Right ventricle myocardium inferior (tissue), 1 donor: ENCODE measurements at regions of chr7 and their contacts with region 1.

Region 1: GRCh38 chr7:102272075-102272917 is 14.4 kb upstream of the SH2B2 start:
- DNase-seq: peak; percentile 91
- ATAC-seq: peak; percentile 87

Region 2: DNA sequence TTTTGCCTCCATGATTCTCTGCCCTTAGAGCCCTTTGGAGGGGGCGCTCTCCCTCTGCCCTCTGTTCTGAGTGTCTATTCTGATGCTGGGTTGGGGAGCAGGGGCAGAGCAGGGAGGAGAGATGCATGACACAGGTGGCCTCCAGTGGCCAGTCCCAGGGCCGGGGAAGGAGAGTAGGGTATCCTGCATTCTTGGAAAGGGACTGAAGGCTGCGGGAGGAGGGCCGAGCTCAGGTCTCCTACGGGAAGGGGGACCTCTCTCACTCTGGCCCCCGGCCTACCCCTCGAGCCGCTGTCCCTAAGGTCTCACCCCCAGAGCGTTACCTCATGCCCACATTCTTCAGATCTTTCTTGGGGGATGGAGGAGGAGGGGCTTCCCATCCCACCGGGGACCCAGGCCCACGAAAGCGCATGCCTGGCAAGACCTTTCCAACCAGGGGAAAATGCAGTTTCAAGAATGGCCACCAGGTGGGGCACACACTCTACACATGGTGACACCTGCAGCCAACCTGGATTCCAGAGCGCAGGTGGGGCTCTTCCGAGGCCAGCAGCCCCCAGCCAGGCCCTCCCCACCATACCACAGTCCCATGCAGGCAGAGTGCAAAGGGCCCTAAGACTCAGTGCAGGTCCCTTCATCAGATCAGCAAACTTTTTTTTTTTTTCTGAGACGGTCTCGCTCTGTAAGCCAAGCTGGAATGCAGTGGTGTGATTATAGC is 729.6 kb before region 1 on chr7:
- intact Hi-C with region 1: loop called (anchors 1 kb)
- DNase-seq: no peak
- ATAC-seq: no peak

Region 3: DNA sequence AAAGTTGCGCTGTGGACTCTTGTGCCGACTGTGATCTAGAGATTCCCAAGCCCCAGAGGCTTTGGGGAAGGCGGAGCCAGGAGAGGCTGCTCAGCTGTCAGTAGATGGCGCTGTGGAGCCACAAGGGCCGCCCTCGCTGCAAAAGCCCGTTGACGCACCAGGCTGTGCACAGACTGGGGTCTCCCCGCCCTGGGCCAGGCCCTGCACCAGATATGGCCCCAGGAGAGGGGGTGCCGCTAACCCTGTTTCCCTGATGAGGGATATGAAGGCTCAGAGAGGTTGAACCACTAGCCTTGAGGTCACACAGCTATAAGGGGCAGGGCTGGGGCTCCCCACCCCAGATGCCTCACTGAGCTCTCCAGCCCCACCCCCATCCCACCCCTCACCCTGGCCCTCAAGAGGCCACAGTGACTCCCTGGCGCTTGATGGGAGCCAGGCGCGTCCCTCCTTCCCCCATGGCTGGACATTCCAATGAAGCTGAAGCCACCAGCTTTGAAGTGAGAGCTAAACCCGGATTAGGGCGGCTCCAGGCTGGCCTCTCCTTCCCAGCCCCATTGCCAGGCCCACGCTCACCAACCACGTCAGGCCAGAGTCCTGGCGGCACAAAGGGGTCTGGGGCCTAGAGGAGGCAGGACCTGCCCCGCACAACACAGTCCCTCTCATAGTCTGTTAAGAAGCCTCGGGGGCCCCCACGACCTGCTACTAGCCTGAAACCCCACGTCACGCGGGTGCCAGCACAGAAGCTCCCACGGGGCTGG is 669.6 kb before region 1 on chr7:
- intact Hi-C with region 1: loop called (anchors 1 kb)
- DNase-seq: peak; percentile 86
- ATAC-seq: peak; percentile 78

Region 4: DNA sequence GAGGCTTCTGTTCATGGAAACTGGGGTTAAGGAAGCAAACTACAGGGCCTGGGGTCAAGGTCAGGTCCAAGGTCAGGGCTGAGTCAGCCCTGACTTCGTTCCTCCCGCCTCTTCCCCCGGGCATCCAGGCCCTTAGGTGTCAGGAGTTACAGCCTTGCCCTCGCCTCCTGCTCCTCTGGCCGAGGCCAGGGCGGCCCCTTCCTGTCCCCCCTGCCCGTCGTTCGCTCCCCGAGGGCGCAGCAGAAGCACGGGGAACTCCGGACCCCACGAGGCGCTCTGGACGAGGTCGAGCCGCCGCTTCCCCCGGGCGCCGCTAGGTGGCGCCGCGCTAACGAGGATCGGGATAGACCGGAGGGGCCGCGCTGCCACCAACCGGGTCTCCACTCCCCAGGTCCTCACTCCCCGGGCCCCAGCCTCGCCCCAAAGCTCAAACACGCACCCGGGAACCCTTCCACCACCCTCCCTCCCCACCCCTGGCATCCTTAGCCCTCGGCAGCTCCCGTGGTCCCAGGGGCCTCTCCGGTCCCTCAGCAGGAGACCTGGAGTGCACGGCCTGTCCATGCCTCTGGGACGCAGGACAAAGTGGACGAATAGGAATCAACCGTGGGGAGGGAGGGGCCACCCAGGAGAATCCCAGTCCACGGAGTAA is 584.0 kb before region 1 on chr7:
- intact Hi-C with region 1: loop called (anchors 2 kb)
- DNase-seq: peak; percentile 93
- ATAC-seq: peak; percentile 91

Region 5: DNA sequence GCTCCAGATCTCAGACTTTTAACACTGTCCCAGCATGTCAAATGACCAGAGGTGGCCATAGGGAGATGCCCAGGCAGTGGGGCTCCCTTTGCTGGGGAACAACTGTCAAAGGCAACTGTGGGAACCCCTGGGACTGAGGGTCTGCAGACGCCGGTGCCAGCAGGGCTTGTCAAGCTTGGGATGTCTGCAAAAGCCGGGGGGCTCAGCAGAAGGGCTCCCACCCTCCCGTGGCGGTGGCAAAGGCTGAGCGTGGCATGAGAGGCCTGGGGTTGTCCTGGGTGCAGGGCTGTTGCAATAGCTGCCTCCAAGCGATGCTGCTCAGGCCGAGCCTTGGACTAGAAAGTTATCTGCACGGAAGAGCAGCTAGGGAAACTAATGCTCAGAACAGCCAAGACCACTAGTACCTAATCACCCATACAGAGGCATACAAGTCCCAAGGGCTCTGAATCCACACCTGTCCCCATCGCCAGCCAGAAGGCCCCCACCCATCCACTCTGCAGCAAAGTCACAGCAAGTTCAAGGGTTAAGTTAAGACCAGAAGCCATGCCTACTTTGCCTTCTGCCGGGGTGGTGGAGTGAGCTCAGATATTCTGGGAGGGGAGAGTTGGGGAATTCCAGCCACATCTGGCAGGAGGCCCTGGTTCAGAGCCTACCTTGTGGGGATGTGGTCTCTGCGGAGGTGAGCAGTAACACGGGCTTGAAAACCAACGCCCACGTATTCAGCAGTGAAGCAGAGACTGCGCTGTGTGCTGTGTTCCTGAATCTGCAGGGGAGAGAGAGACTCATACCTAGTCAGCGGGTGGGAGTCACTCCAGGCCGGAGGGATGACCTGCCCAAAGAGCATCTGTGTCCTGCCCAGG is 19.0 kb after region 1 on chr7:
- intact Hi-C with region 1: no loop called
- DNase-seq: no peak
- ATAC-seq: no peak